ENCODE measurements at regions of chr12 and their contacts with region 1.

Region 1: GRCh38 chr12:130266751-130267150 is 70.9 kb upstream of the PIWIL1 start:
- DNase-seq: peak; percentile 44 to 66
- H3K4me3 ChIP-seq: no peak overlapping the region
- H3K27ac ChIP-seq: no peak overlapping the region
- H3K4me1 ChIP-seq: no peaks in the 10 kb centered on the region
- H3K27me3 ChIP-seq: peaks cover 0 to 14% (median 5%) of the 10 kb centered on the region in 4 experiments; a peak in 4 of 7 replicates
- CTCF ChIP-seq: peak; percentile 59 to 83 (median 64)
- EP300 ChIP-seq: no peak
- POLR2A ChIP-seq: no peak
- RAD21 ChIP-seq: peak; percentile 76 to 82

Region 2: DNA sequence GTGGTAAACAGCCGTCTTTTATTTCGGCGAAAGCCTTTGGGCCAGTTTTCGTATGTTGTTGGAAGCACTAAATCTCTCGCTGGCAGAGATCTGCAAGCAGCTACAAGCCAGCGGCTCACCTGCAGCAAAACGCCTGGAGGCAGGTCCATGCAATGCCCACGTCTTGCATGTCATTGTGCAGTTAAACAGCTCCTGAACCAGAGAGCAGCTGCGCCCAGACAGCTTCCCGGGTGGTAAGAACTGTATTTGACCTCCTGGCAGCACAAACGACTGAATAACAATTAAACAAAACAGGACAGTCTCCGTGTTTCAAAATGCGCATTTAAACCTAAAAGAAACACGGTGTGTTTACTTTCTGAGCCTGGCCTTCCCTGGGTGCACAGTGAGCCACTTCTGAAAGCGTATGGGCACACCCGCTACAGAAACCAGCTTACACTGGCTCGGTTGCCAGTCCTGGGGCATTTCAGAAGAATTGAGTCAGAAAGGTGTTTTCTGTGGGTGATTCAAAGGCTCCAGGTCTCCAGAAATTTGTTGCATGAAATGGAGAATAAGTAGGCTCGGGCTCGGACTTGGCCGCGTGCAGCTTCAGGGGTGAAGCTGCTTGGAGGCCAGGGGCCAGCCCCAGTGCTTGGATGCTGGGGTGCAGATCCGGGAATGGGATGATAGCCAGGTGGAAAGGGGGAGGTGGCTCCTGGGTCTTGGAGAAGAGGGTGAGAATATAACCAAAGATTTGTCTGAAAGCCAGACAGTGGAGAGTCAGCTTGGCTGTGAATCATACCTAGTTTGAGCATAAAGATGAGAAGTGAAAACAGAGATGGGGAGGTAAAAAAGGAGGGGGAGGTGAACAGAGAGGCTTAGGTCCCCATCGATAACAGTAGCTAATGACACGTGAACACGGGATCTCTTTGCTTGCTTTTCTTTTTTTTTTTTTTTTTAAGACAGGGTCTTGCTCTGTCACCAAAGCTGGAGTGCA is 129.4 kb before region 1 on chr12:
- CTCF ChIA-PET with region 1: no interaction called
- POLR2A ChIA-PET with region 1: no interaction called
- DNase-seq: peak in 1 of 2 experiments; percentile 44
- H3K4me3 ChIP-seq: 0 out of 8 replicates have a peak overlapping the region, but pooled peaks of 1 of the 4 experiments have one; percentile 1
- H3K27ac ChIP-seq: no peak overlapping the region
- H3K4me1 ChIP-seq: peaks cover 0 to 16% (median 9%) of the 10 kb centered on the region in 4 experiments; a peak in 6 of 7 replicates
- H3K27me3 ChIP-seq: peaks cover 0 to 52% (median 37%) of the 10 kb centered on the region in 4 experiments; a peak in 5 of 7 replicates
- CTCF ChIP-seq: no peak
- EP300 ChIP-seq: no peak
- POLR2A ChIP-seq: no peak
- RAD21 ChIP-seq: no peak

Region 3: GRCh38 chr12:130222519-130223218 is 44.1 kb before region 1 on chr12:
- CTCF ChIA-PET with region 1: interaction called, 12 read pairs
- POLR2A ChIA-PET with region 1: no interaction called
- DNase-seq: peak; percentile 27 to 75
- H3K4me3 ChIP-seq: peak overlapping the region in 1 of 4 experiments; percentile 32; a peak in 1 of 8 replicates
- H3K27ac ChIP-seq: no peak overlapping the region
- H3K4me1 ChIP-seq: peaks cover 2 to 19% (median 11%) of the 10 kb centered on the region in 4 experiments
- H3K27me3 ChIP-seq: peaks cover 23 to 78% (median 59%) of the 10 kb centered on the region in 4 experiments
- CTCF ChIP-seq: peak; percentile 62 to 75 (median 64)
- EP300 ChIP-seq: no peak
- POLR2A ChIP-seq: no peak
- RAD21 ChIP-seq: peak; percentile 65 to 74

Region 4: DNA sequence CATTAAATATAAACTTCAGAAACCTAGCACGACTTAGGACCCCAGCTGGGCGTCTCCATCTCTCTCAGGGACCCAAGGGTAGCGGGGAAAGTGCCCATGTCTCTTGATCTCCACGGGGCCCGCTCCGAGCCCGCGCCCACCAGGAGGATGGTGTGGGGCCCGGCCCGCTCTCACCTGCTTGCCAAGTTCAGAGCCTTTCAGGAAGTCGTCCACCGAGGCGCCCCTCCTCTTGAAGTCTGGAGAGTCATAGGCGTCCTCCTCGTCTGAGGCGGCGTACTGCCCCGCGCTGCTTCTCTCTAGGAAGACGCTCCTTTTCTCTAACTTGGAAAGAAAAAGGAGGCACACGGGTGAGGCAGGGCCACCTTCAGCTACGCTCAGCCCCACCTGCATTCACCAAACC is 167.8 kb after region 1 on chr12:
- CTCF ChIA-PET with region 1: no interaction called
- POLR2A ChIA-PET with region 1: no interaction called
- DNase-seq: no peak
- H3K4me3 ChIP-seq: no peak overlapping the region
- H3K27ac ChIP-seq: no peak overlapping the region
- H3K4me1 ChIP-seq: no peaks in the 10 kb centered on the region
- H3K27me3 ChIP-seq: no peaks in the 10 kb centered on the region; a peak in 1 of 7 replicates
- CTCF ChIP-seq: no peak
- EP300 ChIP-seq: no peak
- POLR2A ChIP-seq: no peak
- RAD21 ChIP-seq: no peak

Measured in H1 (cell line).